Sigmoid colon (tissue), 7 donors: ENCODE measurements at regions of chr12 and their contacts with region 1.

Region 1: GRCh38 chr12:103930034-103930786 is at the start of gene HSP90B1:
- DNase-seq: peak; percentile 100
- H3K4me3 ChIP-seq: peak within 1 kb of the TSS; percentile 68 to 84 (median 78)
- H3K27ac ChIP-seq: peak within 1 kb of the TSS; percentile 89 to 96 (median 95)
- H3K4me1 ChIP-seq: peaks cover 0 to 57% (median 47%) of the 10 kb centered on the region in 4 donors
- H3K27me3 ChIP-seq: no peaks in the 10 kb centered on the region
- CTCF ChIP-seq: no peak
- EP300 ChIP-seq: peak in 1 of 4 donors; percentile 38
- POLR2A ChIP-seq: peak; percentile 75 to 90
- total RNA-seq, gene HSP90B1: 206 to 299 (median 222) TPM

Region 2: GRCh38 chr12:103799870-103800771 is 130.1 kb before region 1 on chr12:
- intact Hi-C with region 1: loop called (anchors 10 kb)
- DNase-seq: peak; percentile 83
- H3K4me3 ChIP-seq: no peak overlapping the region
- H3K27ac ChIP-seq: peak overlapping the region; percentile 72 to 99 (median 78)
- H3K4me1 ChIP-seq: peaks cover 0 to 96% (median 86%) of the 10 kb centered on the region in 4 donors
- H3K27me3 ChIP-seq: no peaks in the 10 kb centered on the region
- CTCF ChIP-seq: no peak
- EP300 ChIP-seq: peak in 2 of 4 donors; percentile 33
- POLR2A ChIP-seq: no peak

Region 3: GRCh38 chr12:103877934-103878510 is 52.2 kb before region 1 on chr12:
- intact Hi-C with region 1: loop called (anchors 5 kb)
- DNase-seq: peak; percentile 78
- H3K4me3 ChIP-seq: no peak overlapping the region
- H3K27ac ChIP-seq: no peak overlapping the region
- H3K4me1 ChIP-seq: peaks cover 0 to 5% (median 0%) of the 10 kb centered on the region in 4 donors
- H3K27me3 ChIP-seq: no peaks in the 10 kb centered on the region
- CTCF ChIP-seq: peak; percentile 51 to 64 (median 60)
- EP300 ChIP-seq: no peak
- POLR2A ChIP-seq: no peak

Region 4: GRCh38 chr12:103956516-103957027 is 26.4 kb after region 1 on chr12:
- intact Hi-C with region 1: loop called (anchors 2 kb)
- DNase-seq: no peak
- H3K4me3 ChIP-seq: peak overlapping the region; percentile 62 to 94 (median 68)
- H3K27ac ChIP-seq: peak overlapping the region; percentile 88 to 91 (median 90)
- H3K4me1 ChIP-seq: peaks cover 0 to 25% (median 21%) of the 10 kb centered on the region in 4 donors
- H3K27me3 ChIP-seq: no peaks in the 10 kb centered on the region
- CTCF ChIP-seq: no peak
- EP300 ChIP-seq: no peak
- POLR2A ChIP-seq: no peak

Region 5: GRCh38 chr12:103965590-103966504 is 35.6 kb after region 1 on chr12 and contains the start of gene TDG:
- intact Hi-C with region 1: loop called (anchors 2 kb)
- DNase-seq: peak; percentile 99
- H3K4me3 ChIP-seq: peak within 1 kb of the TSS; percentile 67 to 83 (median 73)
- H3K27ac ChIP-seq: peak within 1 kb of the TSS; percentile 92 to 97 (median 94)
- H3K4me1 ChIP-seq: peaks cover 0 to 59% (median 48%) of the 10 kb centered on the region in 4 donors
- H3K27me3 ChIP-seq: no peaks in the 10 kb centered on the region
- CTCF ChIP-seq: no peak
- EP300 ChIP-seq: peak in 1 of 4 donors; percentile 75
- POLR2A ChIP-seq: peak; percentile 83 to 89
- total RNA-seq, gene TDG: 12.8 to 24.1 (median 21.9) TPM